SK-N-SH (cell line): ENCODE measurements at regions of chr15 and their contacts with region 1.

Region 1: GRCh38 chr15:65595960-65596359 is 15.0 kb downstream of the INTS14 start:
- DNase-seq: peak; percentile 59
- H3K4me3 ChIP-seq: no peak overlapping the region
- H3K27ac ChIP-seq: no peak overlapping the region
- H3K4me1 ChIP-seq: no peaks in the 10 kb centered on the region
- H3K27me3 ChIP-seq: no peaks in the 10 kb centered on the region
- CTCF ChIP-seq: peak; percentile 59
- EP300 ChIP-seq: no peak
- RAD21 ChIP-seq: peak; percentile 67

Region 2: GRCh38 chr15:65610871-65611718 is 15.1 kb after region 1 on chr15 and contains the start of gene INTS14:
- CTCF ChIA-PET with region 1: interaction called, 19 read pairs
- POLR2A ChIA-PET with region 1: interaction called, 4 read pairs
- DNase-seq: peak; percentile 98
- H3K4me3 ChIP-seq: peak within 1 kb of the TSS; percentile 77 to 99
- H3K27ac ChIP-seq: peak within 1 kb of the TSS; percentile 83 to 93
- H3K4me1 ChIP-seq: peaks cover 14 to 16% of the 10 kb centered on the region in 2 experiments; a peak in 3 of 4 replicates
- H3K27me3 ChIP-seq: no peaks in the 10 kb centered on the region
- CTCF ChIP-seq: peak; percentile 54
- EP300 ChIP-seq: peak in 1 of 2 experiments; percentile 44; a peak in 1 of 4 replicates
- RAD21 ChIP-seq: peak; percentile 63
- polyA plus RNA-seq, gene INTS14: 44.9 and 55.5 TPM in 2 replicates